Activated T-helper 1 cell treated with anti-CD3 and anti-CD28 coated beads, Interleukin-12 subunit alpha, Interleukin-12 subunit beta, Interleukin-2, Interleukin-4 antibody, amounts not matched to agents 30 ng/mL and 10 ng/mL and 1 ng/mL, durations not matched to agents 14 hours and 24 hours and 36 hours (primary cell): ENCODE measurements at regions of chr21 and their contacts with region 1.

Region 1: DNA sequence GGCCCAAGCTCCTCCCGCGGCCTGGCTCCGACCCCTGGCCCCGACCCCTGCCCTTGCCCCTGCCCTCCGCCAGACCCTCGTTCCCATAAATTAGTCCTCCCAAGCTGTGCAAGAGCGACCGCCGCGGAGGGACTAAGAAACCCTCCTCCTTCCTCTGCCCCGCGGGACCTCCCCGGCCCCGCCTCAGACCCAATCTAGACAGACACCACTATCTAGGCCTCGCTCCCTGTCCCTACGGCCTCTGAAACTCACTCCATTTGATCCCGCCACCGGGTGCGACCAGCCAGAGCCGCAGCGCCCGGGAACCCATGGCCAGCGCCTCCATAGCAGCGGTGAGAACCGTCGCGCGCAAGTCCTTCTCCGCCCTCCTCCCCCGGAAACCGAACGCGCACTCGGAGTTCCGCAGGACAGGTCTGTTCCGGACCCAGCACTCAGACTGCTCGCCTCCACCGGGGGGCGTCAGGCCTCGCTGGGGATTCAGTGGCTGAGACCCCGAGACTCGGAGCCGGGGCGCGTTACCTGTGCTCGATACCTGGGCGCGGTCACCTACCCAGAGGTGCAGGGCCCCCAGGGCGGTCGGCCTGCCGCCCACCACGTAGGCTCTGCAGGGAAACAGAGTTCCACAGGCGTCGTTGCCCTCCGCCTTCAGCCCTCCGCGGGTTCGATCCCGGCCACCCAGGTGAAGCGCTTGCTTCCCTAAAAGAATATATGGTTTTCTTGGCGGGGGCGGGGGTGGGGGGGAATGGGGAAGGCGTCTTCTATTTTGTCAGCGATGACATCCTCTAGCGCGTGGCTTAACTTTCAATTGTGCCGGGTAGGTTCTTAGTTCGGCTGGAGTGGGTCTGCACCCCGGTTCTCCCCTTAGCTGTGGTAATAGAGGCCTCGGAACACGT is at the start of gene MRPL39:
- DNase-seq: peak; percentile 83
- H3K4me3 Mint-ChIP-seq: peak within 1 kb of the TSS; percentile 100
- H3K27ac Mint-ChIP-seq: peak within 1 kb of the TSS; percentile 100
- H3K4me1 Mint-ChIP-seq: peaks cover 36% of the 10 kb centered on the region
- H3K27me3 Mint-ChIP-seq: no peaks in the 10 kb centered on the region
- total RNA-seq, gene MRPL39: 48.6 and 55.8 TPM in 2 replicates

Region 2: DNA sequence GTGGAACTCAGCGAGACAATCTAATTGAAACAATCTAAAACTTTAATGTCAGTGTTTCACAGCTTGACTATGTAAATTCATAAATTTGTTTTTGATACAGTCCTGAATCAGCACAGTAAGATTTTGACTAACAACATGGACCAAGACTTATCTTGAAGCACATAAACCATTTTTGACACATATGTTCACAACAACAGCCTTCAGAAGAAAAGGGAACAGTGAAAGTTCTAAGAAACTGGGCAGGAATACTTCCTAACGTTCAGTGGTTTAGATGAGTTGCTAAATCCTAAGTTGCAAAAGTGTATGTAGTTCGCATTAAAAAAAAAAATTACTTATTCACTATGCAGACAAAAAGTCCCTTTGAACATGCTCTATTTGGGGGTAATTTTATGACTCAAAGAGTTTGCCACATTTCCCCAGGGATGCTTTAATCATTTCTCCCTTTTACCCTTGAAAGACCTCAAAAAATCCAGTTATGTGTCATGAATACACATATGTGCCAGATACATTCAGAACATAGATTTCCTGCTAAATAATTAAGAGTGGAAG is 120.3 kb before region 1 on chr21:
- intact Hi-C with region 1: loop called (anchors 1 kb)
- DNase-seq: no peak
- H3K4me3 Mint-ChIP-seq: peak overlapping the region; percentile 47
- H3K27ac Mint-ChIP-seq: peak overlapping the region; percentile 85
- H3K4me1 Mint-ChIP-seq: peaks cover 60% of the 10 kb centered on the region
- H3K27me3 Mint-ChIP-seq: no peaks in the 10 kb centered on the region

Region 3: GRCh38 chr21:25639551-25640201 is 32.3 kb after region 1 on chr21:
- intact Hi-C with region 1: loop called (anchors 1 kb)
- DNase-seq: peak; percentile 10
- H3K4me3 Mint-ChIP-seq: peak overlapping the region; percentile 77
- H3K27ac Mint-ChIP-seq: no peak overlapping the region
- H3K4me1 Mint-ChIP-seq: peaks cover 32% of the 10 kb centered on the region
- H3K27me3 Mint-ChIP-seq: peaks cover 27% of the 10 kb centered on the region

Region 4: DNA sequence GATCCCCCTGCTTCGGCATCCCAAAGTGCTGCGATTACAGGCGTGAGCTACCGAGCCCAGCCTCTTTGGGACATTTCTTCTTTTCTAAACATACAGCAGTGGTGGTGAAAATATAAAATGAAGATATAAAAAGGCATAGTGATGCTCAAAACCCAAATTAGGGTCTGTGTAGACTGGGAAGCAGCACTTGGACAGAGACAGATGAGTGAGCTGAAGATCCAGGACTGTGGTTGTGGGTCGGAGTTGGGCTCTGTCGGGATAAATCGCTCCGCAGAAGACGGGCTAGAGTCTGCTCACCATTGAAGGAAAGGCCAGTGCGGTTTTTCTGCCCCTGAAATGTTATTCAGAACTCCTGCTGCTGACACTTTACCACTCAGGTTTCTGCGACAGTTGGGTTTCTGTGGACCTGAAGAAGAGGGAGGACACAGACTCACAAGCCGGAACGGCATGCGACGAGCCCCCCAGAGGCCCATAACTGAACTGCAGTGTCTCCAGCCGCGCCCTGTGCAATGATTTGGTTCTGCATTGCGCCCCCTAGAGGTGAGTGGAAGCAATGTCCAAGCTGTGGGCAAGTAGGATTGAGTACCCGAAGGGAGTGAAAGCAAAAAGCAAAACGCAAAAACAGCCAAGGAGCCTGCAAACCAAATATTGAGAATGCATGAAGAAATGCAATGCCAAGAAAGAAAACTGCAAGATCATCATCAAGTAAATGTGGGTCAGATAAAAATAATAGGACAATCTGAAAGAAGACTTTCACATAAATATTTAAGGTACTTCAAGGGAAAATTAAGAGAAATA is 194.0 kb after region 1 on chr21:
- intact Hi-C with region 1: loop called (anchors 1 kb)
- DNase-seq: peak; percentile 85
- H3K4me3 Mint-ChIP-seq: no peak overlapping the region
- H3K27ac Mint-ChIP-seq: no peak overlapping the region
- H3K4me1 Mint-ChIP-seq: peaks cover 7% of the 10 kb centered on the region
- H3K27me3 Mint-ChIP-seq: peaks cover 14% of the 10 kb centered on the region

Region 5: DNA sequence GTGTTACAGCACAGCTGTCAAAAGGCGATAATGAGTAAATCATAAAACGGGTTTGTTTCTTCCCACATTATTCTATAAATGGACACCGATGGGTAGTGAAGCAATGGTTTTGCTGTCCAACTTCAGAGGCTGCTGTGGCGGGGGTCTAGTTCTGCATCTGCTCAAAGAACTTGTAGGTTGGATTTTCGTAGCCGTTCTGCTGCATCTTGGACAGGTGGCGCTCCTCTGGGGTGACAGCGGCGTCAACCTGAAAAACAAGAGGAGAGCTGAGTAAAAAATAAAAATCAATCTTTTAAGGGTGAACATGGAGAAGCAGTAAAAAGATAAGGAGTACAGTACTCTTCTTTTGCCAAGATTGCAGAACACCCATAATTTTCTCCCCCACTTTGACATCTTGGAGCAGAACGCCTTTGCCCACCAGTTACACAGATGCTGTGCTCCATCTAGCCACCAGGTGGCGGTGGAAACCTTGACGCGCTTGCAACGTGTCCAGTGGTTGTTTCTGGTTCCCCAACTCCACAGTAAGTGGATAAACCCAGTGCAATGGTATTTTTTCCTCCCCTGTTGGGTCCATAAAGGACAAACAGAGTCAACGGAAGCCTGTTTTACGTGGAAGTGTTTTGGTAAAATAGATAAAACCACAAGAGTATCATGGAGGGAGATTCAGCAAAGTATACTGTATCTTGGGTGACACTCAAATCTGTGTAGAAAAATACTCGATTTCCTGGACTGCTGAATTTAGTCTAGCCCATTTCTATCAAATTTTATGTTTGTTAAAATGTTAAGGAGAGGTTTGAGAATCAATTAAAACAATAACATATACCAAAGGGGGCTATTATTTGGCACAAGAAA is 274.4 kb after region 1 on chr21:
- intact Hi-C with region 1: loop called (anchors 5 kb)
- DNase-seq: peak; percentile 48
- H3K4me3 Mint-ChIP-seq: no peak overlapping the region
- H3K27ac Mint-ChIP-seq: no peak overlapping the region
- H3K4me1 Mint-ChIP-seq: no peaks in the 10 kb centered on the region
- H3K27me3 Mint-ChIP-seq: no peaks in the 10 kb centered on the region

Region 6: DNA sequence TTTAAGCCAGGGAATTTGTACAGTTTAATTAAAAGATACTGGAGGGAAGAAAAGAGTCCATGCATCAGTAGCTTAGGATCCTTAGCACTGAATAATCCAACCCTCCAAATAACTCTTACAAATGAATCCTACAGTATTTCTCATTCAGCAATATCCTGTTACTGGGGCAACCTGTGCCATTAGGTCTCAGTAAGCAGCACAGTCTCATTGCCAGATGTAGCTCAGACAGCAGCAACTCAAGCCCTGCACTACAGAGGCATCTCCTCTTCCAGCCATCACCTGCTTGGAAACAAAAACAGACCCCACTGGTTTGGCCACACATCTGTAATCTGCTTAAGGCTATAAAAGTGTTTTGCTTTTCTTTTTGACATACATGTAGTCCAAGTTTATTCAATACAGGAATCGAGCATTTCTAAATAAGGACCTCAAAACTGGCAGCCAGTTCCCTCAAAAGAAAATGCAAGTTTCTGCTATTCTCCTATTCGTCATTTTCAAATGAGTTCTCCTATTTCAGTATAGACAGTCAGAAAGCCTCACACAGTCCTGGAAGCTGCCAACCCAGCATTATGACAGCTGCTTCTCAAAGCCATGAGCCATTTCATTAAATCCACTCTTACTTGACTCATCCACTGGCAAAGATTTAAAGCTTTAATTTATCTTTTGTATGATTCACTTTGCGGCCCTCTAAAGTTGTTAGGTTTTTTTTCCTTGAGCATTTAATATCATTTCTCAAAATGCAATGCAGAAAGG is 434.2 kb after region 1 on chr21:
- intact Hi-C with region 1: no loop called
- DNase-seq: no peak
- H3K4me3 Mint-ChIP-seq: no peak overlapping the region
- H3K27ac Mint-ChIP-seq: no peak overlapping the region
- H3K4me1 Mint-ChIP-seq: no peaks in the 10 kb centered on the region
- H3K27me3 Mint-ChIP-seq: no peaks in the 10 kb centered on the region

Region 7: GRCh38 chr21:26715878-26716506 is 1108.6 kb after region 1 on chr21:
- intact Hi-C with region 1: loop called (anchors 1 kb)
- DNase-seq: no peak
- H3K4me3 Mint-ChIP-seq: no peak overlapping the region
- H3K27ac Mint-ChIP-seq: no peak overlapping the region
- H3K4me1 Mint-ChIP-seq: no peaks in the 10 kb centered on the region
- H3K27me3 Mint-ChIP-seq: no peaks in the 10 kb centered on the region